Psoas muscle (tissue), 8 donors: ENCODE measurements at regions of chr13 and their contacts with region 1.

Region 1: GRCh38 chr13:44050450-44051063 is 170.9 kb downstream of the LACC1 start:
- DNase-seq: no peak
- ATAC-seq: peak in 3 of 4 donors; percentile 44 to 80 (median 75)
- H3K4me3 ChIP-seq: no peak overlapping the region
- H3K27ac ChIP-seq: no peak overlapping the region
- H3K4me1 ChIP-seq: peaks cover 3% of the 10 kb centered on the region
- H3K27me3 ChIP-seq: no peaks in the 10 kb centered on the region
- CTCF ChIP-seq: peak; percentile 85

Region 2: DNA sequence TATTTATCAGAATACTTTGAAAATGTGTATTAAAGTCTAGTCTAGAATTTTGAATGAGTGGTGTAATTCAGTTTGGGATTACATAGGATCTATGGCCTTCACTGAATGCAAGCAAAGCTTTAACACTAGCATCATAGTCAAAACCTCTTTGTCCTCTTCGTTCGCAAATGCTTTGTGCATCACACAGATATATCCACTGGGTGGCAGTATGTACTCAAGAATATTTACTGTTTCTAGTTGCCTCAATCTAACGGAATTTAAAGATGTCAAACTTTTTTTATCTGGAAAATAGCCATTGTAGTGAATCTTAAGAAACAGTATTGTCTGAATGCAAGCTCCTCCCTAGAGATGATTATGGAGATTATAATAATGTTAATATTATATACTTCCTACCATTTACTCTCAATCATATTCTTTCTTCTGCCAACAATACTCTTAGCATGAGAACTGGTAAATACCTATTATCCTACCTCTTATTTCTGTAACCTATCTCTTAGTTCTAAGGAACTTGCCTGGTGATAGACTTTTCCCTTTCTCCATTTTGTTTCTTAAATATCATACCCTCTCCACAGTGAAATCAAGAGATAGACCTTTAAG is 145.0 kb before region 1 on chr13:
- intact Hi-C with region 1: loop called (anchors 5 kb)
- DNase-seq: no peak
- ATAC-seq: peak; percentile 66 to 89 (median 82)
- H3K4me3 ChIP-seq: no peak overlapping the region
- H3K27ac ChIP-seq: no peak overlapping the region
- H3K4me1 ChIP-seq: peaks cover 6% of the 10 kb centered on the region
- H3K27me3 ChIP-seq: no peaks in the 10 kb centered on the region
- CTCF ChIP-seq: peak; percentile 88

Region 3: DNA sequence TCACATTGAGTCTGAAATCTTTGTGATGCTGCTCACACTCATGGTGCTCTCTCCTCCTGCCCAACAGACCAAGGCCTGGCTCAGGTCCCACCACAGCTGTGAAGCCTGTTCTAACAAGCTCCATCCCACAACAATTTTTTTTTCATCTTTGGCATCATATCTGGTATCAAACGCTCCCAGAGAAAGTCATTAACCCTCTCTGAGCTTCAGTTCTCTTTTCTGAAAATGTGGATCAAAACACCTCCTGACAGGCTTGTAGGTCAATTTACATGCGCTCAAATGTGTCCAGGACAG is 53.6 kb after region 1 on chr13:
- intact Hi-C with region 1: no loop called
- DNase-seq: peak in 1 of 2 donors; percentile 75
- ATAC-seq: no peak
- H3K4me3 ChIP-seq: no peak overlapping the region
- H3K27ac ChIP-seq: no peak overlapping the region
- H3K4me1 ChIP-seq: peaks cover 11% of the 10 kb centered on the region
- H3K27me3 ChIP-seq: no peaks in the 10 kb centered on the region
- CTCF ChIP-seq: no peak

Region 4: GRCh38 chr13:44116562-44117332 is 66.2 kb after region 1 on chr13:
- intact Hi-C with region 1: loop called in 1 of 2 experiments (anchors 5 kb)
- DNase-seq: no peak
- ATAC-seq: peak; percentile 85 to 95 (median 92)
- H3K4me3 ChIP-seq: peak overlapping the region; percentile 13
- H3K27ac ChIP-seq: peak overlapping the region; percentile 70
- H3K4me1 ChIP-seq: peaks cover 23% of the 10 kb centered on the region
- H3K27me3 ChIP-seq: no peaks in the 10 kb centered on the region
- CTCF ChIP-seq: no peak

Region 5: GRCh38 chr13:44128552-44129001 is 78.0 kb after region 1 on chr13:
- intact Hi-C with region 1: no loop called
- DNase-seq: peak; percentile 43 to 79
- ATAC-seq: peak; percentile 91 to 95 (median 92)
- H3K4me3 ChIP-seq: no peak overlapping the region
- H3K27ac ChIP-seq: peak overlapping the region; percentile 88
- H3K4me1 ChIP-seq: peaks cover 15% of the 10 kb centered on the region
- H3K27me3 ChIP-seq: no peaks in the 10 kb centered on the region
- CTCF ChIP-seq: peak; percentile 31

Region 6: GRCh38 chr13:44191504-44192171 is 141.1 kb after region 1 on chr13:
- intact Hi-C with region 1: loop called in 1 of 2 experiments (anchors 5 kb)
- DNase-seq: peak in 1 of 2 donors; percentile 22
- ATAC-seq: peak; percentile 93 to 98 (median 97)
- H3K4me3 ChIP-seq: peak overlapping the region; percentile 53
- H3K27ac ChIP-seq: peak overlapping the region; percentile 56
- H3K4me1 ChIP-seq: peaks cover 8% of the 10 kb centered on the region
- H3K27me3 ChIP-seq: no peaks in the 10 kb centered on the region
- CTCF ChIP-seq: peak; percentile 84